ENCODE measurements at regions of chr3 and their contacts with region 1.

Region 1: DNA sequence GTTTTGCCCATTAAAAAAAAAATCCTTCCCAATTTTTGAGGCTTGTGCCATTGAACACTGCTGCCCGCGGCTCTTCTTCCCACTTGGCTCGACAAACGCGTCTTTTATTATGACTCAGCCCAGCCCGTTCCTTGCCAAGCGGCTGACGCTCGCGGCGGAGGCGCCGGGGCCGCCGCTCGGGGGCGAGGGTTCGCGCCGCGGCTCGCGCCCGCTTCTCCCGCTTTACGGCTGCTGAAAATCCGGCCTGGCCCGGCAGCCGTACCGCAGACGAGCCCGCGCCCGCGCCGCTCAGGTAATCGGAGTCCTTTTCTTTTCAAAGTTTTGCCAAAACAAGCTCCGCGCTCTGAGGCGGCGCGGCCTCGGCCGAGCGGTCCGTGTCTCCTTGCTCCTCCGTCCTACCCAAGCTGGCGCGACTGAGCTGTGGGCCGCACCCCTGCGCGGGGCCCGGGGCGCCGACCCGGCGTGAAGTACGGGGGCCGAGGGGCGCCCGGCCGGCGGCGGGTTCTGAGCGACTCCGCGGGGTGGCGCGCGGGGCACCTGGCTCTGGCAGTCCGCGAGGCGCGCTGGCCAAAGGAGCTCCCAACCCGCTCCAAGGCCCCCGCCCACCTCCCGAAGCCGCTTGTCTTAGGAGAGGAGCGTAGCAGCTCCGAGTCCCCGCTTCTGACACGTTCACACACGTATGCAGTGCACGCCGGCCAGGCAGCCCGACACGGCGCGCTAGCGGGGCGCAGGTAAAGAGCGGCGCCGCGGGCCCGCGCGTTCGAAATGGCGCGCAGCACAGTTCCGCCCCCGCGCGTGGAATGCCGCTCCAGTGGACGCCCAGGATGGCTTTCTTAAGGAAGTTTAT is 418.2 kb upstream of the NAALADL2 start:
- DNase-seq: peak; percentile 93 to 96
- H3K4me3 ChIP-seq: peak overlapping the region; percentile 50
- H3K4me3 Mint-ChIP-seq: no peak overlapping the region
- H3K27ac Mint-ChIP-seq: peak overlapping the region; percentile 78
- H3K4me1 ChIP-seq: peaks cover 18% of the 10 kb centered on the region
- H3K4me1 Mint-ChIP-seq: peaks cover 24% of the 10 kb centered on the region
- H3K27me3 ChIP-seq: no peaks in the 10 kb centered on the region
- H3K27me3 Mint-ChIP-seq: no peaks in the 10 kb centered on the region
- CTCF ChIP-seq: peak in 1 of 2 experiments; percentile 25

Region 2: GRCh38 chr3:174219740-174220139 is 221.2 kb before region 1 on chr3:
- CTCF ChIA-PET with region 1: no interaction called
- POLR2A ChIA-PET with region 1: no interaction called
- intact Hi-C with region 1: loop called (anchors 5 kb)
- DNase-seq: no peak
- H3K4me3 ChIP-seq: no peak overlapping the region
- H3K4me3 Mint-ChIP-seq: no peak overlapping the region
- H3K27ac Mint-ChIP-seq: no peak overlapping the region
- H3K4me1 ChIP-seq: no peaks in the 10 kb centered on the region
- H3K4me1 Mint-ChIP-seq: peaks cover 7% of the 10 kb centered on the region
- H3K27me3 ChIP-seq: no peaks in the 10 kb centered on the region
- H3K27me3 Mint-ChIP-seq: no peaks in the 10 kb centered on the region
- CTCF ChIP-seq: peak in 1 of 2 experiments; percentile 24

Region 3: DNA sequence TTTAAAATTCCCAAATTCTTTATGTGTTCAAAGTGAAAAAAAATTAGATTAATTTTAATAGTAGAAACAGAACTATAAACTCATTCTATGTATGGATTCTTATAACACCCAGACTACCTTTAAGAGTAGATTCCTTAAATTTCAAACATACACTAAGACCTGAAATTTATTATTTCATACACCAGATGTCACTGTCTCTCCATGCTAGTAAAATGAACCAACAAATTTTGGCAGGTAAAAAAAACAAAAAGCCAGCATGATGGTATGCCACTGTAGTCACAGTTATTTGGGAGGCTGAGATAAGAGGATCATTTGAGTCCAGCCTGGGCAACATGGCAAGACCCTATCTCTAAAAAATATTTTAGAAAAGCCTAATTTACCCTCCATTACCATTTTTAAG is 43.1 kb before region 1 on chr3:
- CTCF ChIA-PET with region 1: no interaction called
- POLR2A ChIA-PET with region 1: no interaction called
- intact Hi-C with region 1: loop called (anchors 1 kb)
- DNase-seq: peak in 1 of 2 experiments; percentile 39
- H3K4me3 ChIP-seq: no peak overlapping the region
- H3K4me3 Mint-ChIP-seq: no peak overlapping the region
- H3K27ac Mint-ChIP-seq: no peak overlapping the region
- H3K4me1 ChIP-seq: no peaks in the 10 kb centered on the region
- H3K4me1 Mint-ChIP-seq: no peaks in the 10 kb centered on the region
- H3K27me3 ChIP-seq: no peaks in the 10 kb centered on the region
- H3K27me3 Mint-ChIP-seq: no peaks in the 10 kb centered on the region
- CTCF ChIP-seq: peak; percentile 16 to 45

Region 4: DNA sequence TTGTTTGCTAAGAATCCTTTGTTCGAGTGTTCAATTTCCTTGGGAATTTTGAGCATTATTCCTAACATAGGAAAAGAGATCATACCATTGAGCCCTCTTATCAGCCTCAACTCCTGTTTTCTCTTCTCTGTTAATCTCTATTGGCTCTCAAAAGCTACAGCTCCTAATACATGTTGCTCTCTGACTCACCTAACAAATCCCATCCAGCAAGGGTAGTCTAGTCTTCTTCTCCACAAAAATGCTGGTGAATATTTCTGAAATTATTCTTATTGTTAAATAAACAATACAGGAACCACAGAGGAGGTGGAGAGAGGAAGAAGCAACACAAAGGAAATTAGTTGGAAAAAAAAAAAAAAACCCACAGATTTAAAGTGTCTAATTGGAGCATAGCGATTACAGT is 92.3 kb after region 1 on chr3:
- CTCF ChIA-PET with region 1: interaction called, 8 read pairs
- POLR2A ChIA-PET with region 1: no interaction called
- intact Hi-C with region 1: loop called (anchors 1 kb)
- DNase-seq: no peak
- H3K4me3 ChIP-seq: no peak overlapping the region
- H3K4me3 Mint-ChIP-seq: no peak overlapping the region
- H3K27ac Mint-ChIP-seq: no peak overlapping the region
- H3K4me1 ChIP-seq: peaks cover 48% of the 10 kb centered on the region
- H3K4me1 Mint-ChIP-seq: peaks cover 32% of the 10 kb centered on the region
- H3K27me3 ChIP-seq: no peaks in the 10 kb centered on the region
- H3K27me3 Mint-ChIP-seq: no peaks in the 10 kb centered on the region
- CTCF ChIP-seq: no peak

Region 5: GRCh38 chr3:174620138-174620537 is 179.2 kb after region 1 on chr3:
- CTCF ChIA-PET with region 1: no interaction called
- POLR2A ChIA-PET with region 1: no interaction called
- intact Hi-C with region 1: loop called (anchors 1 kb)
- DNase-seq: no peak
- H3K4me3 ChIP-seq: no peak overlapping the region
- H3K4me3 Mint-ChIP-seq: no peak overlapping the region
- H3K27ac Mint-ChIP-seq: no peak overlapping the region
- H3K4me1 ChIP-seq: no peaks in the 10 kb centered on the region; the same call in 1 of the 2 replicates
- H3K4me1 Mint-ChIP-seq: no peaks in the 10 kb centered on the region
- H3K27me3 ChIP-seq: no peaks in the 10 kb centered on the region
- H3K27me3 Mint-ChIP-seq: no peaks in the 10 kb centered on the region
- CTCF ChIP-seq: no peak

Region 6: DNA sequence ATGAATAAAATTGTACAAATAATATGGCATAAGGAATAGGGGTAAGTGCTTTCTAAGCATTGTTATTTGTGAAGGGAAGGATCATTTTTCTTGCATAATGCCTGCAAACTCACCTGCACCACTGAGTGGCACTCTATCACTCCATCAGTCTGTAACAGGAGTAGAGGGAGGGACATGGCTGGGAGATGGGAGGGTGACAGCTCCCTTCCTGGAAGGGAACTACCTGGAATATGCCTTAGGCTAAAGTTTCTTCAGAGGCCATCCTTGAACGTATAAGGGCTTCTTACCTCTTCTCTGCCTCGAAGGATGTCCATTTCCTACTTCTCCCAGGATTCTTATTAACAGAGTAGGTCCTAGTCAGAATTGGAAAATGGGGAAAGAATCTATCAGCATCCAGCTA is 421.2 kb after region 1 on chr3:
- CTCF ChIA-PET with region 1: no interaction called
- POLR2A ChIA-PET with region 1: no interaction called
- intact Hi-C with region 1: loop called (anchors 2 kb)
- DNase-seq: peak; percentile 58 to 60
- H3K4me3 ChIP-seq: no peak overlapping the region
- H3K4me3 Mint-ChIP-seq: no peak overlapping the region
- H3K27ac Mint-ChIP-seq: no peak overlapping the region
- H3K4me1 ChIP-seq: peaks cover 41% of the 10 kb centered on the region
- H3K4me1 Mint-ChIP-seq: peaks cover 14% of the 10 kb centered on the region
- H3K27me3 ChIP-seq: no peaks in the 10 kb centered on the region
- H3K27me3 Mint-ChIP-seq: no peaks in the 10 kb centered on the region
- CTCF ChIP-seq: peak; percentile 17 to 47